OCI-LY7 (cell line): ENCODE measurements at regions of chr6 and their contacts with region 1.

Region 1: GRCh38 chr6:149316798-149317655 is 485 bp upstream of the TAB2 start:
- DNase-seq: peak; percentile 94
- H3K4me3 ChIP-seq: peak overlapping the region; percentile 75
- H3K27ac ChIP-seq: peak overlapping the region; percentile 86
- H3K4me1 ChIP-seq: peaks cover 20% of the 10 kb centered on the region
- CTCF ChIP-seq: peak; percentile 46; the same call in 1 of the 2 replicates

Region 2: DNA sequence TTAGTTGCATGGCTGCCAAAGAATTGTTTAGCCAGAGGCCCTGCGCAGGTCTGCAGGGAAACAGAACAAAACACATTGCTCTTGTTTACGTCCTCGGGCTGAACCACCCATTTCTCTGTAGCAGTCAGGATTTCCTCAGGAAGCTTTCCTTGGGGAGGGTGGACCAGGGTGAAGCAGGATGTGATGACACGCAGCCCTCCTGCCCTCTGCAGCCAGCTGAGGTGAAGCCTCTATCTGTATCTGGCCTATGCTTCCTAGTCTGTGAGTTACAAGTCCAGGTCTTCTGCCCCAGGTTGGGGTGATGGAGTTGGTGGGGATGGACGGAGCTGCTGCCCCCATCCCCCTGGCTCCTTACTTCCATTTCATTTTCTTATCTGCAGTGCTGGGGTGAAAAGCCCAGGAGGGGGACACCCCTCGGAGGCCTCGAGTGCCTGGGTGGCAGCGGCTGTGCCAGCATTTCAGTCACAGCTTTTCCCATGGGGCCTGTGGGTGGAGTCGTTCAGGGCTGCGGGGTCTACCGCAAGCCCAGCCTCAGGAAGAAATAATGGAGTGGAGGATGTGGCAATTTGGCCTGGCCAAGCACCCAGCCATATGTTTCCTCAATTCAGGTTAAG is 949.5 kb before region 1 on chr6:
- CTCF ChIA-PET with region 1: no interaction called
- POLR2A ChIA-PET with region 1: no interaction called
- intact Hi-C with region 1: no loop called
- DNase-seq: no peak
- H3K4me3 ChIP-seq: no peak overlapping the region
- H3K27ac ChIP-seq: no peak overlapping the region
- H3K4me1 ChIP-seq: no peaks in the 10 kb centered on the region
- CTCF ChIP-seq: no peak

Region 3: DNA sequence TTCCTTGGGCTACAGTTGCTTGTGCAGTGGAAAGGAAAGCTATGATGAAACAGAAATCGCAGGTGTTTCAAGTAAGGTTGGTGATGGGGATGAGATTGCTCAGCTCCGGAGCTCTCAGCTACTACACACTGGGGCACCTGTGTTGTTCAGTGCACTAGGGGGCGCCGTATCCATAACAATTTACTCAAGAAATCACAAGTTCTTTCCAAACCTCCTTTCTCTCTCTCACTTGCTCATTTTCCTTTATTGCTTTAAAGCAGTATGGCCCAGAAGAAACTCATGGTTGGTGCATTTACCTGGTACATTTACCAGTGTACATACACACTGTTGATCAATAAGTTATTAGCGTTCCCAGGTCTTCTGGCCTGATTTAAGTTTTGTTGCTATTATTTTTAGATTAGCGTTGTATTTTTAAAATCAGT is 234.7 kb before region 1 on chr6:
- CTCF ChIA-PET with region 1: no interaction called
- POLR2A ChIA-PET with region 1: interaction called, 3 read pairs
- intact Hi-C with region 1: loop called (anchors 5 kb)
- DNase-seq: peak; percentile 77
- H3K4me3 ChIP-seq: no peak overlapping the region
- H3K27ac ChIP-seq: no peak overlapping the region
- H3K4me1 ChIP-seq: no peaks in the 10 kb centered on the region
- CTCF ChIP-seq: peak; percentile 86

Region 4: GRCh38 chr6:149246691-149247384 is 70.2 kb before region 1 on chr6:
- CTCF ChIA-PET with region 1: no interaction called
- POLR2A ChIA-PET with region 1: no interaction called
- intact Hi-C with region 1: loop called (anchors 2 kb)
- DNase-seq: peak; percentile 78
- H3K4me3 ChIP-seq: peak overlapping the region; percentile 48
- H3K27ac ChIP-seq: peak overlapping the region; percentile 59
- H3K4me1 ChIP-seq: peaks cover 17% of the 10 kb centered on the region
- CTCF ChIP-seq: no peak

Region 5: DNA sequence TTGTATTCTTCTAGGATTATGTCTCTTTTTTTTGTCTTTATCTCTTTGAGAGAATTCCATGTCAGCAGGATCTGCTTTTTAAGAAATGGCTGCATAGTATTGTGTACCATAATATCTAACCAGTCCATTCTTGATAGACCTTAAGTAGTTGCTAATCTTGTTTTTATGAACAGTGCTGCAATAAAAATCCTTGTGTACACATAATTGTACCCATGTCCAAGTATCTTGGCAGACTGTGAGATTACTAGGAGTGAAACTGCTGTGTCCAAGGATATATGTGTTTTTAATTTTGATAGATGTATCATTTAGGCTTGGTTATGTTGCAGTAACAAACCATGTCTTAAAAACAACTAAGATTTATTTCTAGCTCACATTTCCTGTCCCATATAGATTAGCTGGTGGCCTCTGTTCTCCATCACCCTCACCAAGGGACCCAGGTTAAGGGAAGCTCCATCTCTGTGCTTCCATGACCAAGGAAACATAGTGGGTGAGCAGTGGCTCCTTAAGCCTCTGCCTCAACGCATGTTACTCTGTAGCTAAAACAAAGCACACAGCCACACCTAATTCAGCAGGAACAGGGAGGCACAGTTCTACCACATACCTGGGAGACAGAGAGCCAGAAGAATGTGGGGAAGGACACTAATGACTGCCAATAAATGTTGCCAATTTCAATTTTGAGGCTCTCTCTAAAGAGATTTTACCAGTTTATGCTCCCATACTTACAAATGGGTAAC is 70.9 kb after region 1 on chr6:
- CTCF ChIA-PET with region 1: no interaction called
- POLR2A ChIA-PET with region 1: no interaction called
- intact Hi-C with region 1: no loop called
- DNase-seq: no peak
- H3K4me3 ChIP-seq: no peak overlapping the region
- H3K27ac ChIP-seq: no peak overlapping the region
- H3K4me1 ChIP-seq: no peaks in the 10 kb centered on the region
- CTCF ChIP-seq: no peak

Region 6: DNA sequence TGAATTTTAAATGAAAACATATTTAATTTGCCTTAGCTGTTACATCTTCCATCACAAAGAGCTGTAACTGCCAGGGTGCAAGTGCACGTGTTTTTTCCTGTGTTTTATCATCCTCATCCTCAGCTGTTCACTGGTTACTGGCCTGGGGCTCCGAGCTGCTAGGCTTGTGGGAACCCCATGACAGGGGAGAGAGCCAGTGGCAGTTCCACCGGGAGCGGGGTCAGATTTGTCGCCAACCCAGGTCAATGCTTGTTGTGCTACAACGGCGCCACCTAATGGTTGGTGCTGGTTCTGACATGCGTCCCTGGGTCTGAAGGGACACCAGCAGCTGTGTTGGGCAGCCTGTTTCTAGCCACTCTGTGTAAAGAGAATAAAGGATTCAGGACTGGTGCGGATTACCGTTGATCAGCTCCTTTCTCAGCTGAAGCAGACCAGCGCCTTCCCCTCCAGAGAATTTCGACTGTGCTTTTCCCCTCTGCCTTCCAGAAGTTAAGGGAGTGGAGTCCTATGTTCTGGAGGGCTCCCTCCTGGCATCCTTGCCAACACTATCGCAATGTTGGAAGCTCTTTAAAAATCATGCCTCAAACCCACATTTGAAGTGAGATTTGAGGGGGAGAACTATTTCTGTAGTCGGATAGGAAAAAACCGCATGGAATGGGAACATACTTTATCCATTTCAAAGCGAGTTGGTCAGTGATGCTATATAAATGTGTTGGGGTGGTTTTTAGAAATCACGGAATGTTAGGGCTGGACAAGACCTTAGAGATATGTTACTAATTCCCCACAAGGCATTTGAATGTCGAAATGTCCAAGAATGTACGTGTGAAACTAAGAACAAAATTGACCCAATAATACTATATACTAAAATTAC is 115.1 kb after region 1 on chr6:
- CTCF ChIA-PET with region 1: no interaction called
- POLR2A ChIA-PET with region 1: no interaction called
- intact Hi-C with region 1: loop called (anchors 2 kb)
- DNase-seq: peak; percentile 88
- H3K4me3 ChIP-seq: no peak overlapping the region
- H3K27ac ChIP-seq: no peak overlapping the region
- H3K4me1 ChIP-seq: peaks cover 7% of the 10 kb centered on the region
- CTCF ChIP-seq: peak; percentile 95